ENCODE measurements at regions of chr16 and their contacts with region 1.

Region 1: DNA sequence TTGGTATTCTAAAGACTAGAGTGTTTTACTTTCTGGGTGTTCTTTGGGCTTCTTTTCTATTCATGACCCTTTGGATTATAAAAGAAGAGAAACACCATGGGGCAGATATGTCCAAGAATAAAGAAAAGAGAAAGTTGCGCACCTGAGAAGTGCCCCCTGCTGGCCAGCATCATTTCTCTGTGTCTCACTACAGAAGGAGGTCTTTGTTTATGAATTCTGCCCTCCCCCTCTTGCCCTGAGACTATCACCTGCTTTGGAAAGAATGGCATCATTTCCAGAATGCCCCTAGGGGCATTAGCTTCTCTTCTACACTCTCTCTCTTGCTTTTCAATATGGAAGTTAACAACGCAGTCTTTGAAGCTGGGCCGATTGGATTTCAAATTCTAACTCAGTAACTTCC is 45.0 kb downstream of the CDH13 start:
- DNase-seq: no peak
- ATAC-seq: no peak
- H3K4me3 Mint-ChIP-seq: no peak overlapping the region
- H3K27ac Mint-ChIP-seq: no peak overlapping the region
- H3K4me1 Mint-ChIP-seq: peaks cover 4% of the 10 kb centered on the region
- H3K27me3 Mint-ChIP-seq: peaks cover 18% of the 10 kb centered on the region

Region 2: GRCh38 chr16:82603784-82604411 is 67.8 kb before region 1 on chr16:
- CTCF ChIA-PET with region 1: no interaction called
- POLR2A ChIA-PET with region 1: no interaction called
- DNase-seq: no peak
- ATAC-seq: no peak
- H3K4me3 Mint-ChIP-seq: no peak overlapping the region
- H3K27ac Mint-ChIP-seq: no peak overlapping the region
- H3K4me1 Mint-ChIP-seq: no peaks in the 10 kb centered on the region
- H3K27me3 Mint-ChIP-seq: peaks cover 10% of the 10 kb centered on the region

Region 3: DNA sequence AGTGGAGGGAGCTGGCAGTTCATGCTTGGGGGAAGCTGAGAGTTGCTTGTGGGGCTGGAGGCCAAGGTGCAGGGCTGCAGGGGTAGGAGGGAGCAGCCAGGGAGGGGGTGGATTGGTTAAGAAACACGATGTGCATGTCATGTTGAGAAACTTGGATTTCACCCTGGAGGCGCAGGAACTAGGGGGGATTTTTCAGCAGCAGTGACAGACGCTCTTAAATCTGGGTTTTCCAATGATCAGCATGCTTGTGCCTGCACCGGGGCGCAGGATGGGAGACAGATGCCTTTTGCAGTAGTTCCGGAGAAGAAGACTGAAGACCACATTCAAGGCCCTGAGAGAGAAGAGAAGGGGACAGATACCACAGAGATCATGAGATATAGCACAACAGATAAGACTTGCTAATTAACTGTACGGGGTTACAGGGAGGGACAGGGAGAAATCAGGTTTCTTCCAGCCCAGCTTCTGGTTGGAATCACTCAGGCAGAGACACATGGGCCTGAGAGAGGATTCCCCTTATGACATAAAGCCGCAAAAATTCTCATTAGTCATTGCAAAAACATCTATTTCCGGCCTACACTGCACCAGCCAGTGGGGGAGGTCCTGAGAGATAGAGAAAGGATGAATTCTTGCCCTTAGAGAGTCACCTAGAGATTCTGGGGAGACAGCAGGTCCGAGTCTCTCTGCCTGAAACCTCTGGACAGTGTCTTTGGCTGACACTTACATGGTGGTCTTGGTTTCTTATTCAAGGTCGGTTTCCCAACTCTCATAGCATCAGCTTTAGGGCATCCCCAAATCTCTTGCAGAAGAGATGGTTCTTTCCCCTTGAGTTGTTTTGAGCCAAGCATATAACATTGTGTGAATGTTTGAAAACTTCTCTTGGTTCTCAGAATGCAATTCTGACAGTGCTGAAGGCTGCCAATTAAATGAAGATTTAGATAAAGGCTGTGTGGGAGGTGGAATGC is 17.9 kb before region 1 on chr16:
- CTCF ChIA-PET with region 1: interaction called, 23 read pairs
- POLR2A ChIA-PET with region 1: interaction called, 3 read pairs
- DNase-seq: peak; percentile 67
- ATAC-seq: peak; percentile 51
- H3K4me3 Mint-ChIP-seq: peak overlapping the region; percentile 44
- H3K27ac Mint-ChIP-seq: peak overlapping the region; percentile 98
- H3K4me1 Mint-ChIP-seq: peaks cover 96% of the 10 kb centered on the region
- H3K27me3 Mint-ChIP-seq: no peaks in the 10 kb centered on the region

Region 4: GRCh38 chr16:82755569-82756282 is 84.0 kb after region 1 on chr16:
- CTCF ChIA-PET with region 1: no interaction called
- POLR2A ChIA-PET with region 1: no interaction called
- DNase-seq: no peak
- ATAC-seq: no peak
- H3K4me3 Mint-ChIP-seq: no peak overlapping the region
- H3K27ac Mint-ChIP-seq: no peak overlapping the region
- H3K4me1 Mint-ChIP-seq: no peaks in the 10 kb centered on the region
- H3K27me3 Mint-ChIP-seq: peaks cover 19% of the 10 kb centered on the region

Measured in activated CD8-positive, alpha-beta T cell treated with anti-CD3 and anti-CD28 coated beads, Interleukin-2, amount 10 ng/mL, durations not matched to agents 7 days and 5 days (primary cell).